ENCODE measurements at regions of chr17 and their contacts with region 1.

Region 1: DNA sequence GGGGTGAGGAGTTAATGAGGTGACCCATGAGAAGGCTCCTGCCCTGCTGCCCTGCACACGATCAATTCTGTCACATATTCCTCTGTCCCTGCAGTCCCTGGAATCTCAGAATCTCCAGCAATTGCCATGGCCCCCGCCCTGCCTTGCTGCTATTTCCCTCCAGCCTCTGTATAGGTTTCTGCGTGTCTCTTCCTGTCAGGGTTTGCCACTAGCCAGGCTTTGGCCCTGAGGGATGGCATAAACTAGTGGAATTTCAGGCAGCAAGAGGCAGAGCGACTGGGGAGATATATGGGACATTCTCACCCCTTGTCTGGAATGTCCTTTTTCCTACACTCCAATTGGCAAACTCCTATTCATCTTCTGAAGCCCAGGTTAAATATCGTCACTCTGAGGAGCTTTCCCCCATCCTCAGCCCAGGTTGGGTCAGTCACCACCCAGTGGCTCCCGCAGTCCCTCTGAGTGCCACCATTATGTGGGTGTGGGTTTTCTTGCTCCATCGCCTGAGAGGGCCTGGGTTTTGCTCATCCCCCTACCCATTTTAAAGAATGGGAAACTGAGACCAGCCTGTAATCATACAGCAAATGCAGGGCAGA is 15.5 kb upstream of the NATD1 start:
- DNase-seq: no peak
- H3K4me3 ChIP-seq: no peak overlapping the region
- H3K27me3 ChIP-seq: no peaks in the 10 kb centered on the region
- CTCF ChIP-seq: no peak

Region 2: DNA sequence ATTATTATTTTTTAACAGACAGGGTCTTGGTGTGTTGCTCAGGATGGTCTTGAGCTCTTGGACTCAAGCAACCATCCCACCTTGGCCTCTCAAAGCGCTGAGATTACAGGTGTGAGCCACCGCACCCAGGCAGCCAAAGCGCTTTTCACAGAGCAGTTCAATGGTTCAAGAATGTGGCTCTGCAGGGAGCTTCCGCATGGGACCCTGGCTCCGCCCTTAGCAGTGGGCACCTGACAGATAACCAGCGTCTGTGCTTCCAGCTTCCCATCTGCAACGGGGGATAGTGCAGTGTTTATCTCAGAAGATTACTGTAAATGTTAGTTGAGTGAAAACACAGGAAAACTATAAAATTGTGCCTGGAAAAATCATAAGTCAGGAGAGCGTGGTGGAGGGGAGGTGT is 206.9 kb after region 1 on chr17:
- CTCF ChIA-PET with region 1: no interaction called
- POLR2A ChIA-PET with region 1: interaction called, 18 read pairs
- DNase-seq: no peak
- H3K4me3 ChIP-seq: no peak overlapping the region
- H3K27me3 ChIP-seq: peaks cover 14% of the 10 kb centered on the region
- CTCF ChIP-seq: no peak